Activated CD4-positive, alpha-beta memory T cell treated with anti-CD3 and anti-CD28 coated beads for 36 hours (primary cell): ENCODE measurements at regions of chr19 and their contacts with region 1.

Region 1: GRCh38 chr19:55339048-55339888 is at the start of gene KMT5C:
- DNase-seq: peak; percentile 100
- H3K4me3 Mint-ChIP-seq: peak within 1 kb of the TSS; percentile 87
- H3K27ac Mint-ChIP-seq: peak within 1 kb of the TSS; percentile 95
- H3K4me1 Mint-ChIP-seq: peaks cover 13% of the 10 kb centered on the region
- H3K27me3 Mint-ChIP-seq: peaks cover 6% of the 10 kb centered on the region
- total RNA-seq, gene KMT5C: 34.2 to 35.2 TPM

Region 2: DNA sequence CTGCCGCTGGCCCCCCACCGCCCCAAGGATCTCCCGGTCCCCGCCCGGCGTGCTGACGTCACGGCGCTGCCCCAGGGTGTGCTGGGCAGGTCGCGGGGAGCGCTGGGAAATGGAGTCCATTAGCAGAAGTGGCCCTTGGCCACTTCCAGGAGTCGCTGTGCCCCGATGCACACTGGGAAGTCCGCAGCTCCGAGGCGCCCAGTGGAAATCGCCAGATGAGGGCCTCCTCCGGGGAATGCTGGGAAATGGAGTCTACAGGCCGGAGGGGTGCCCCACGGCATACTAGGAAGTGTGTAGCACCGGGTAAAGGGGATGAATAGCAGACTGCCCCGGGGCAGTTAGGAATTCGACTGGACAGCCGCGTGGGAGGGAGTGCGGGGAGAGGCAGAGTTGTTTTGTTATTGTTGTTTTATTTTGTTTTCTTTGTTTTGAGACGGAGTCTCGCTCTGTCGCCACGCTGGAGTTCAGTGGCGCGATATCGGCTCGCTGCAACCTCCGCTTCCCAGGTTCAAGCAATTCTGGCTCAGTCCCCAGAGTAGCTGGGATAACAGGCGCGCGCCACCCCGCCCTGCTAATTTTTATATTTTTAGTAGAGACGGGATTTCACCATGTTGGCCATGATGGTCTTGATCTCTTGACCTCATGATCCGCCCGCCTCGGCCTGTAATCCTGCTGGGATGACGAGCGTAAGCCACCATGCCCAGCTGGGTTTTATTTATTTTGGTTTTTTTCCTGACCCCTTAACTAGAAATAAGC is 221.5 kb before region 1 on chr19 and contains the start of gene PPP1R12C:
- CTCF ChIA-PET with region 1: no interaction called
- POLR2A ChIA-PET with region 1: no interaction called
- intact Hi-C with region 1: loop called (anchors 1 kb)
- DNase-seq: peak; percentile 99
- H3K4me3 Mint-ChIP-seq: peak within 1 kb of the TSS; percentile 97
- H3K27ac Mint-ChIP-seq: peak within 1 kb of the TSS; percentile 89
- H3K4me1 Mint-ChIP-seq: peaks cover 30% of the 10 kb centered on the region
- H3K27me3 Mint-ChIP-seq: peaks cover under 1% of the 10 kb centered on the region
- total RNA-seq, gene PPP1R12C: 62.7 to 73.2 TPM

Region 3: DNA sequence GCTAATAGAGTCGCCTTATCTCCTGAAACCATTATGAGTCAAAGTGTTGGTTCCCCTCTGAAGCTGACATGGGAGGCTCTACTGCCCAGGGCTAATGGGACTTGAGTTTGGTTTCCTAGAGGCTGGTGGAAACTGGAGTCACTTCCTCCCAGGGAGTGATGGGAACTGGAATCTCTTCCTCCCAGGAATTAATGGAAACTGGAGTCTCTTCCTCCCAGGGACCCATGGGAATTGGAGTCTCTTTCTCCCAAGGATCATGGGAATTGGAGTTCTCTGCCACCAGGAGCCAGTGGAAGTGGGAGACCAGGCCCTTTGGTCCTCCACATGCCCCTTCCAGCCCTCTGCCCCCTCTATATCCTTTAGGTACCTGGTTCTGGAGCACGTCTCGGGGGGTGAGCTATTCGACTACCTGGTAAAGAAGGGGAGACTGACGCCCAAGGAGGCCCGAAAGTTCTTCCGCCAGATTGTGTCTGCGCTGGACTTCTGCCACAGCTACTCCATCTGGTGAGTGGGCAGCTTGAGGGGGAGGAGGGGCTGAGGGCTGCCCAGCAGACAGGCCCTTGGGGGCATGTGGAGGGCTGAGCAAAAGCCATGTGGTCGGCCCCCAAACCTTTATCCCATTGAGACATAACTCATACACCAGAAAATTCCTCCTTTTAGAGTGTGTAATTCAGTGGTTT is 50.0 kb before region 1 on chr19:
- CTCF ChIA-PET with region 1: interaction called, 10 read pairs
- POLR2A ChIA-PET with region 1: no interaction called
- intact Hi-C with region 1: no loop called
- DNase-seq: no peak
- H3K4me3 Mint-ChIP-seq: no peak overlapping the region
- H3K27ac Mint-ChIP-seq: no peak overlapping the region
- H3K4me1 Mint-ChIP-seq: no peaks in the 10 kb centered on the region
- H3K27me3 Mint-ChIP-seq: no peaks in the 10 kb centered on the region

Region 4: DNA sequence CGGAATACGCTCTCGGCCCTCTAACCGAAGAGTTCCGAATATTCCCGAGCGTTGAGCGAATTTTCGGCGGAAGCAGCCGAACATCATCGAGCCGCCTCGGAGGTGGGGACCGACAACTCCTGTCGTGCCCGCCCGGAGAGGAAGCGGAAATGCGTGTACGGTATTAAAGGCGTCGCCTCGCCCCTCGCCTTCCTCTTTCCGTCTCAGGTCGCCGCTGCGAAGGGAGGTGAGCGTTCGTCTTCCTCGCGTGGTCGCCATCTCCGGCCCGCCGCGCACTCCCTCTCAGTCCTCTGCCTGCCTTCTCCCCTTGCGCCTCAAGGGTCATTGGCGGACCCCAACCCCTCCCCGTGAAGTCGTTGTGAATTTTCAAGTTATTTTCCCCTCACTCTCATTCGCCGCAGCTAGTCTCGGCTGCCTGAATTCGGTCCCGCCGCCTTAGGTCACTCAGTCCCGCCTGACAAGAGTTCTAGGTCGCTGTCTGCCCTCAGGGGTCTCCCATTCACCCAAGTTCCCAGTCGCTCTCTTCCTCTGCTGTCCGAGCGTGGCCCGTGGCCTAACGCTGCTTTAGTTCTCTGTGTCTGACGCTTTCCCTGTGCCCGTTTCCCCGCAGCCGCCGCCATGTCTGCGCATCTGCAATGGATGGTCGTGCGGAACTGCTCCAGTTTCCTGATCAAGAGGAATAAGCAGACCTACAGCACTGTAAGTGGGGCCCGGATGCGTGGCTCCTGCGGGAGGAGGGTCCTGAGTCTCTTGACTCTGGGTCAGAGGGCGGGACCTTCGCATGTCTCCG is 46.7 kb after region 1 on chr19 and contains the start of gene RPL28:
- CTCF ChIA-PET with region 1: interaction called, 15 read pairs
- POLR2A ChIA-PET with region 1: interaction called, 38 read pairs
- intact Hi-C with region 1: loop called (anchors 1 kb)
- DNase-seq: peak; percentile 99
- H3K4me3 Mint-ChIP-seq: peak within 1 kb of the TSS; percentile 96
- H3K27ac Mint-ChIP-seq: peak within 1 kb of the TSS; percentile 92
- H3K4me1 Mint-ChIP-seq: peaks cover 59% of the 10 kb centered on the region
- H3K27me3 Mint-ChIP-seq: no peaks in the 10 kb centered on the region
- total RNA-seq, gene RPL28: 2,630 to 2,642 TPM

Region 5: DNA sequence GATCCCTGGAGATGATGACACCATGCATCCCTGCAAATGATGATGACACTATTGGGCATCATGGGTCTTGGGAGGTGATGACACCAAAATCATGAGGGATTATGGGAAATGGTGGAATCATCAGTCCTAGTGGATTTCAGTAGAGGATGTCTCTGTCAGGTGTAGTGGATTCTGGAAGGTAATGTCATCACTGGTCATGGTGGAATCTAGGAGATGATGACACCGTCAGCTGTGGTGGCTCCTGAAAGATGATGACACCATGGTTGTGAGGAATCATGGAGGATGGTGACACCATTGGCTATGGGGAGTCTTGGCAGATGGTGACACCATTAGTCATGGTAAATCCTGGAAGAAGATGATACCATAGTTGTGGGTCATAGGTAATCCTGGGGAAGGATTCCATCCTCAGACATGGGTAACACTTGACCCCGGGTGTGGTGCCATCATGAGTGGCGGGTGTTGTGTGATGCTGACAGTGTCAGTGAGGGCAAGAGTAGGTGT is 92.0 kb after region 1 on chr19:
- CTCF ChIA-PET with region 1: no interaction called
- POLR2A ChIA-PET with region 1: no interaction called
- intact Hi-C with region 1: no loop called
- DNase-seq: no peak
- H3K4me3 Mint-ChIP-seq: no peak overlapping the region
- H3K27ac Mint-ChIP-seq: no peak overlapping the region
- H3K4me1 Mint-ChIP-seq: no peaks in the 10 kb centered on the region
- H3K27me3 Mint-ChIP-seq: peaks cover 31% of the 10 kb centered on the region

Region 6: GRCh38 chr19:55461259-55461973 is 122.1 kb after region 1 on chr19 and contains the start of gene ISOC2:
- CTCF ChIA-PET with region 1: no interaction called
- POLR2A ChIA-PET with region 1: interaction called, 4 read pairs
- intact Hi-C with region 1: loop called (anchors 2 kb)
- DNase-seq: peak; percentile 100
- H3K4me3 Mint-ChIP-seq: peak within 1 kb of the TSS; percentile 91
- H3K27ac Mint-ChIP-seq: peak within 1 kb of the TSS; percentile 84
- H3K4me1 Mint-ChIP-seq: peaks cover 21% of the 10 kb centered on the region
- H3K27me3 Mint-ChIP-seq: peaks cover 2% of the 10 kb centered on the region
- total RNA-seq, gene ISOC2: 24.6 to 24.7 TPM